Mammary epithelial cell (primary cell): ENCODE measurements at regions of chr1 and their contacts with region 1.

Region 1: GRCh38 chr1:199113265-199113869 is 474.5 kb downstream of the PTPRC start:
- DNase-seq: peak; percentile 39
- H3K4me3 ChIP-seq: no peak overlapping the region
- H3K27ac ChIP-seq: no peak overlapping the region
- H3K4me1 ChIP-seq: no peaks in the 10 kb centered on the region
- H3K27me3 ChIP-seq: no peaks in the 10 kb centered on the region
- CTCF ChIP-seq: peak; percentile 89 to 97

Region 2: DNA sequence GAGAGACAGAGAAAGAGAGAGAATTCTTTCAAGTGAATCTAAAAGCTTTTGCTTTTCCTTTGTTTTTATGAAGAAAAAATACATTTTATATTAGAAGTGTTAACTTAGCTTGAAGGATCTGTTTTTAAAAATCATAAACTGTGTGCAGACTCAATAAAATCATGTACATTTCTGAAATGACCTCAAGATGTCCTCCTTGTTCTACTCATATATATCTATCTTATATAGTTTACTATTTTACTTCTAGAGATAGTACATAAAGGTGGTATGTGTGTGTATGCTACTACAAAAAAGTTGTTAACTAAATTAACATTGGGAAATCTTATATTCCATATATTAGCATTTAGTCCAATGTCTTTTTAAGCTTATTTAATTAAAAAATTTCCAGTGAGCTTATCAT is 356.9 kb before region 1 on chr1:
- CTCF ChIA-PET with region 1: interaction called, 3 read pairs
- dilution Hi-C with region 1: no loop called
- in situ Hi-C with region 1: loop called in 1 of 2 experiments (anchors 25 kb)
- intact Hi-C with region 1: loop called (anchors 1 kb)
- DNase-seq: no peak
- H3K4me3 ChIP-seq: no peak overlapping the region
- H3K27ac ChIP-seq: no peak overlapping the region
- H3K4me1 ChIP-seq: no peaks in the 10 kb centered on the region
- H3K27me3 ChIP-seq: no peaks in the 10 kb centered on the region
- CTCF ChIP-seq: peak in 1 of 2 donors; percentile 27

Region 3: DNA sequence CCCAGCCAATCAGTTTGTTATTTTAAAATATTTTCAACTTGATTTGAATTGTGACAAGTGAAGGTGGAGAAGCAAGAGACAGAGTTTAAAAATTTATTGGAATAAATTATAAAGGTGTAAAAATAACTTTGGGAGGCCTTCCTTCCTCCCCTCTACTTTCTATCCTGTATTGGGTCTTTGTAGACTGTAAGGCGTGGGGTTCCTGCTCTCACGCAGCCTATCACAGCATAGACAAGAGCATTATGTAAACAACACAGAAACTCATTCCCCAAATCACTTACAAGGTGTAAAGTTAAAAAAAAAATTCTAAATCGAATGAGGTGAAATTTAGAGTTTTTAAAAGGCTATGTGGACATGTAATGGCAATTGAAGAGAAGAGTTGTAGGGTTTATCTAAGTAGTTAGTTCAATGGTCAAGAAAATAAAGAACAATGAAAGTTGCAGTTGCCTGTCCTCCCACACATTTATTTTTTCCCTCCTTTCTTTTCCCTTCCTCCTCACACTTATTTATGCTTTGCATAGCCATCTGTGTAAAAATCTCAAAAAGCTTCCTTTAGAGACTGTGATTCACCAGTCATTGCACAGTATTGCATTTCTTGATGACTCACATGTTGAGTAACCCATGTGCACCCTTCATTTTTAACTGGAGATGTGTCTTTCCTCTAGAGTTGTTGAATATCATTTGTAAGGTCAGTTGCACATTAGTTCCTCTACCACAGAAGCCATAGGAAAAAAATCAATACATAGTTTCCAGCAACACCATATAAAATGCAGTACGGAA is 232.4 kb before region 1 on chr1:
- CTCF ChIA-PET with region 1: no interaction called
- dilution Hi-C with region 1: no loop called
- in situ Hi-C with region 1: no loop called
- intact Hi-C with region 1: loop called (anchors 10 kb)
- DNase-seq: peak; percentile 87
- H3K4me3 ChIP-seq: no peak overlapping the region
- H3K27ac ChIP-seq: peak overlapping the region; percentile 58
- H3K4me1 ChIP-seq: peaks cover 8% of the 10 kb centered on the region
- H3K27me3 ChIP-seq: no peaks in the 10 kb centered on the region
- CTCF ChIP-seq: no peak

Region 4: GRCh38 chr1:199081739-199082138 is 31.6 kb before region 1 on chr1:
- CTCF ChIA-PET with region 1: no interaction called
- dilution Hi-C with region 1: no loop called
- in situ Hi-C with region 1: no loop called
- intact Hi-C with region 1: no loop called
- DNase-seq: no peak
- H3K4me3 ChIP-seq: no peak overlapping the region
- H3K27ac ChIP-seq: no peak overlapping the region
- H3K4me1 ChIP-seq: no peaks in the 10 kb centered on the region
- H3K27me3 ChIP-seq: no peaks in the 10 kb centered on the region
- CTCF ChIP-seq: no peak

Region 5: GRCh38 chr1:199243423-199244061 is 130.2 kb after region 1 on chr1:
- CTCF ChIA-PET with region 1: interaction called, 3 read pairs
- dilution Hi-C with region 1: no loop called
- in situ Hi-C with region 1: no loop called
- intact Hi-C with region 1: loop called (anchors 5 kb)
- DNase-seq: peak; percentile 26
- H3K4me3 ChIP-seq: no peak overlapping the region
- H3K27ac ChIP-seq: no peak overlapping the region
- H3K4me1 ChIP-seq: no peaks in the 10 kb centered on the region
- H3K27me3 ChIP-seq: no peaks in the 10 kb centered on the region
- CTCF ChIP-seq: peak; percentile 62 to 78

Region 6: DNA sequence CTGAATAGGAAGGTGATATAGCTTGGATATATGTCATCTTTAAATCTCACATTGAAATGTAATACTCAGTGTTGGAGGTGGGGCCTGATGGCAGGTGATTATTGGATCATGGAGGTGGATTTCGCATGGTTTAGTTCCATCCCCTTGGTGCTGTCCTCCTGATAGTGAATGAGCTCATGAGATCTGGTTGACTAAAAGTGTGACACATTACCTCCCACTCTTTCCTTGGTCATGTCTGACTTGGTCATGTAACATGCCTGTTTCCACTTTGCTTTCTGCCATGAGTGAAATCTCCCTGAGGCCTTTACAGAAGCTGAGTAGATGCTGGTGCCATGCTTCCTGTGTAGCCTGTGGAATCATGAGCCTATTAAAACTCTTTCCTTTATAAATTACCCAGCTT is 249.6 kb after region 1 on chr1:
- CTCF ChIA-PET with region 1: no interaction called
- dilution Hi-C with region 1: no loop called
- in situ Hi-C with region 1: no loop called
- intact Hi-C with region 1: no loop called
- DNase-seq: no peak
- H3K4me3 ChIP-seq: no peak overlapping the region
- H3K27ac ChIP-seq: no peak overlapping the region
- H3K4me1 ChIP-seq: no peaks in the 10 kb centered on the region
- H3K27me3 ChIP-seq: no peaks in the 10 kb centered on the region
- CTCF ChIP-seq: no peak

Region 7: DNA sequence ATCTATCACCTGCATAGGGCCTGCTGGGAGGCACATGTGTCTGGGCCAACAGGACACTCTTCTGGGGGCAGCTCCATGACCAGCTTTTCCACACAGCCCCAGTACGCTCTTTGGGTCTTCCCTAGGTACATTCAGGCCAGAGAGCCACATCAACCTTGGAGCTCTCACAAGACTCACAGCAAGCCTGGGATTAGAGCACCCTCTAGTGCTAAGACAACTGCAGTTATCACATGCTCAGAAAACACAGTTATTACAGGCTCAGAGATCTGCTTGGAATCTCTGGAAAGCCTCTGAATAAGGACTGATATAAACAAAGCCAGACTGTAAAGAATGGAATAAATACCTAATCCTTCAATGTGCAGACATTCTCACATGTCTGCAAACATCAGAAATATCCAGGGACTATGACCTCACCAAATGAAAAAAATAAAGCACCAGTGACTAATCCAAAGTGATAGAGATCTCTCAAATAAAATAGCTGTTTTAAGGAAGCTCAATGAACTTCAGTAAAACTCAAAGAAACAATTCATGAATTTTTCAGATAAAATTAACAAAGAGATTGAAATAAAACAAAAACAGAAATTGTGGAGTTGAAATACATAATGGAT is 350.3 kb after region 1 on chr1:
- CTCF ChIA-PET with region 1: interaction called, 3 read pairs
- dilution Hi-C with region 1: no loop called
- in situ Hi-C with region 1: no loop called
- intact Hi-C with region 1: loop called (anchors 5 kb)
- DNase-seq: peak; percentile 45
- H3K4me3 ChIP-seq: no peak overlapping the region
- H3K27ac ChIP-seq: no peak overlapping the region
- H3K4me1 ChIP-seq: no peaks in the 10 kb centered on the region
- H3K27me3 ChIP-seq: peaks cover 3% of the 10 kb centered on the region
- CTCF ChIP-seq: peak; percentile 78 to 80